HEK293 (cell line): ENCODE measurements at regions of chr2 and their contacts with region 1.

Region 1: GRCh38 chr2:159438284-159438683 is 151.8 kb upstream of the WDSUB1 start:
- H3K4me3 ChIP-seq: no peak overlapping the region
- H3K27ac ChIP-seq: no peak overlapping the region
- H3K4me1 ChIP-seq: no peaks in the 10 kb centered on the region
- CTCF ChIP-seq: no peak

Region 2: GRCh38 chr2:159449504-159450142 is 11.3 kb after region 1 on chr2:
- CTCF ChIA-PET with region 1: interaction called, 11 read pairs
- POLR2A ChIA-PET with region 1: no interaction called
- H3K4me3 ChIP-seq: no peak overlapping the region
- H3K27ac ChIP-seq: no peak overlapping the region
- H3K4me1 ChIP-seq: peaks cover 6% of the 10 kb centered on the region; the same call in 1 of the 2 replicates
- CTCF ChIP-seq: no peak